ENCODE measurements at regions of chr6 and their contacts with region 1.

Region 1: GRCh38 chr6:44265007-44265721 is at the start of gene NFKBIE:
- DNase-seq: peak; percentile 94
- H3K4me3 ChIP-seq: peak within 1 kb of the TSS; percentile 57 to 82 (median 76)
- H3K27ac ChIP-seq: peak within 1 kb of the TSS; percentile 56
- H3K4me1 ChIP-seq: peaks cover 32% of the 10 kb centered on the region
- H3K27me3 ChIP-seq: no peaks in the 10 kb centered on the region
- CTCF ChIP-seq: peak in 1 of 2 donors; percentile 40
- total RNA-seq, gene NFKBIE: 4.7 to 10.4 TPM

Region 2: GRCh38 chr6:44172731-44173500 is 92.2 kb before region 1 on chr6:
- CTCF ChIA-PET with region 1: interaction called, 4 read pairs
- dilution Hi-C with region 1: no loop called
- in situ Hi-C with region 1: no loop called
- intact Hi-C with region 1: loop called (anchors 1 kb)
- DNase-seq: peak; percentile 69
- H3K4me3 ChIP-seq: no peak overlapping the region
- H3K27ac ChIP-seq: no peak overlapping the region
- H3K4me1 ChIP-seq: peaks cover 7% of the 10 kb centered on the region
- H3K27me3 ChIP-seq: no peaks in the 10 kb centered on the region
- CTCF ChIP-seq: peak; percentile 92 to 94

Region 3: DNA sequence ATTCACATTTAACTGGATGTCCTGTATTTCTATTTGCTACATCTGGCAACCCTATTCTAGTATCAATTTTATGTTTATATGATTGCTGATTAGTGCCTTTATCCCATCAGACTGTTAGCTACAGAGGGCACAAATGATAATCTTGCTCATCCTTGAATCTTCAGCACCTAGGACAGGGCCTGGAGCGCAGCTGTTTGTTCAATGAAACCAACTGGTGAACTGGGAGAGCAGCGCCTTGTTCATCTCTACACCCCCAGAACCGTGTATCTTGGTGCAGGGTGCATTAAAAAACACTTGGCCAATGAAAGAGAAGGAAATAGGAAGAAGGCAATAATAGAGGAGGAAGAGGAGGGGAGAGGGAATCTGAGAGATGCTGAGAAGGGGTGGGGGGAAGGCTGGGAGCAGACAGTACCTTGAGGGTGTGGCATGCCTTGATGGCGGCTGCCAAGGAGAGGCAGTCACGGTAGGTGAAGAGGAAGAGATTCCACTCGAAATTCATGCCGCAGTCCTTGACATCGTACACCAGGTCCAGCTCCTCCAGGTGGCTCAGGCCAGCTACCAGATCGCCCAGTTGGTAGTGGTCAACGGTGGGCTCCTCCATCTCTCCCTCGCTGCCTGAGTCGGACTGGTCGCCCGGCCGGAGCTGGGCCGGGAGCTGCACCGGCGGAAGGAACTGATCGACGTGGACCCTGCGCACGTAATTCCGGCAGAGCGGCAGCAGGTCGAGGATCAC is 20.6 kb after region 1 on chr6:
- CTCF ChIA-PET with region 1: no interaction called
- dilution Hi-C with region 1: no loop called
- in situ Hi-C with region 1: no loop called
- intact Hi-C with region 1: no loop called
- DNase-seq: no peak
- H3K4me3 ChIP-seq: no peak overlapping the region
- H3K27ac ChIP-seq: no peak overlapping the region
- H3K4me1 ChIP-seq: no peaks in the 10 kb centered on the region
- H3K27me3 ChIP-seq: no peaks in the 10 kb centered on the region
- CTCF ChIP-seq: no peak

Region 4: GRCh38 chr6:44304282-44305199 is 39.4 kb after region 1 on chr6:
- CTCF ChIA-PET with region 1: interaction called, 5 read pairs
- dilution Hi-C with region 1: loop called (anchors 5 kb)
- in situ Hi-C with region 1: no loop called
- intact Hi-C with region 1: loop called (anchors 1 kb)
- DNase-seq: peak; percentile 10
- H3K4me3 ChIP-seq: no peak overlapping the region
- H3K27ac ChIP-seq: no peak overlapping the region
- H3K4me1 ChIP-seq: peaks cover 12% of the 10 kb centered on the region
- H3K27me3 ChIP-seq: no peaks in the 10 kb centered on the region
- CTCF ChIP-seq: peak; percentile 65 to 71

Region 5: DNA sequence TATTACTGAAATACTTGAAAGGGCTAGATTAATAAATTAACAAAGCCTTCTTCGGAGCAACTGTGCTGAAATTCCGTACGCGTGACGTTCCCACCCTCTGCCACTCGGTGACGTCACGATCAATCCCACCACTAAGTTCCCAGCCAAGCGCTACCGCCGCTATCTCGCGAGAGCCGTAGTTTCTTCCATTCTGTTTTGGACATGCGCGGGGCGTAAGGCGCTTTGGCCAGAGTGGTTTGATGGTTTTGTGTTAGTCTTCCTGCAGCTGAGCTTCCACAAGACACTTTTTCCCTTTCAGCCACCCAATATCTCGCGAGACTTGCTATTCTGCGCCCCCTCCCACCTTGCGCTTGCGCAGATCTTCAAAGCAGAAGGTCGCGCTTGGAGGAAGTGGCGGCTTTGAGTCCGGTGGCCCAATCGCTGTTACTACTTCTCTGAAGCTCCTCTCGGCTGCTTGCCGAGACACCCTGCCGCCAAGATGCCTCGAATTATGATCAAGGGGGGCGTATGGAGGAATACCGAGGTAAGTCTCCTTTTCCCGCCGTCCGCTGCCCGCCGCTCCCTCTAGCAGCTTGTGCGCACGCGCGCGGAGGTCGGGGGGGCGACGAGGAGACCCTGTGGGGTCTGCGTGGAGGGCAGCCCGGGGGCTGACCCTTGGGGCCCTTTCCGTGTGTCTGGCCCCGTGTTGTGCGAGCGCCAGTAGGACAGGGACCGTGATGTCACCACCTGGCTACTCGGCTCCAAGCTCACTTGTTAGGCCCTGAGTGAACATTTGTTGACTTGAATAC is 122.4 kb after region 1 on chr6 and contains the start of gene CDC5L:
- CTCF ChIA-PET with region 1: interaction called, 29 read pairs
- dilution Hi-C with region 1: no loop called
- in situ Hi-C with region 1: no loop called
- intact Hi-C with region 1: loop called (anchors 2 kb)
- DNase-seq: peak; percentile 97
- H3K4me3 ChIP-seq: peak within 1 kb of the TSS; percentile 83 to 96 (median 87)
- H3K27ac ChIP-seq: peak within 1 kb of the TSS; percentile 89
- H3K4me1 ChIP-seq: peaks cover 15% of the 10 kb centered on the region
- H3K27me3 ChIP-seq: no peaks in the 10 kb centered on the region
- CTCF ChIP-seq: no peak
- total RNA-seq, gene CDC5L: 13.2 to 19.5 TPM

Region 6: GRCh38 chr6:44456070-44456965 is 191.2 kb after region 1 on chr6:
- CTCF ChIA-PET with region 1: no interaction called
- dilution Hi-C with region 1: no loop called
- in situ Hi-C with region 1: no loop called
- intact Hi-C with region 1: loop called (anchors 1 kb)
- DNase-seq: peak; percentile 41
- H3K4me3 ChIP-seq: no peak overlapping the region
- H3K27ac ChIP-seq: no peak overlapping the region
- H3K4me1 ChIP-seq: peaks cover 27% of the 10 kb centered on the region
- H3K27me3 ChIP-seq: no peaks in the 10 kb centered on the region
- CTCF ChIP-seq: peak; percentile 77 to 91